GM13976 (cell line): ENCODE measurements at regions of chr12 and their contacts with region 1.

Region 1: DNA sequence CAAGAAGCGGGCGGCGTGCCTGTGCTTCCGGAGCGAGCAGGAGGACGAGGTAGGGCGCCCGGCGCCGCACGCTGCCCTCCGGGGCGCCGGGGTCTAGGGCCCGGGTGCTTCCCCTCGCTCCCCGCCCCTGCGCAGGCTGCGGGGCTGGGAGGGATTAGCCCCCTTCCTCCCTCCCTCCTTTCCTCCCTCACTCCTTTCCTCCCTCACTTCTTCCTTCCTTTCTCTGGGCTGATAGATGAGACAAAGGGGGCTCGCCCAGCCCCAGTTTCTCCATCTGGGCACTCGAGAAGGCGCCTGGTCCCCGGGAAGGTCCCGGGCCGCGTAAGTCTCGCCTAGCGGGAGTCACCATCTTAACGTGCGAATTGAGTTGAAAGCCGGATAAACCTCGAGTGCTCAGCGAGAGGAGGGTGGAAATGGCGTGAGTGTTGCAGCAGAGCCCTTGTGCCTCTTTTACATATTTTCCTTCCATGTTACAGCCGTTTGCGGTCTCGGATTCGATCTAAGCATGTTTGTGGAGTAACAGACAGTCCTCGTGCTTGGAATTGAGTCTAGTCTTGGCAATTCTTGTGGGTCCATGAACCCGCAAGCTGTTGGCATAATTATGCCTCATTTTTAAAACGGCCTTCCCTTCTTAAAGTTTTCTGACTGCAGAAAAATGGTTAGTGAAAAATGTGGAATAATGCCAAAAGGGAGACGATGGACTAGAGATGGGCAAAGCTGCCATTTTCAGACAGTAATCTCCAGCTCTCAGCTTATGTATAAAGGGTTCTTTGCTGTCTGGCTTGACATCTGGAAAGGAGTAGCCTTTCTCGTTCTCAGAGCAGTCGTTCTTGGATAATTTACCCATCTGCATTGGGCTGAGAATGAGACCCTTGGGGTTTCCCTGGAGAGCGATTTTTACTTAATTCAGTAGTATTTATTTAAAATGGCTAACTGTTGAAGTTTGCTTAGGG is 924 bp downstream of the NUDT4 start:
- DNase-seq: peak; percentile 69
- CTCF ChIP-seq: no peak

Region 2: GRCh38 chr12:92702754-92703679 is 675.6 kb before region 1 on chr12 and contains the start of gene PLEKHG7:
- in situ Hi-C with region 1: no loop called
- DNase-seq: peak; percentile 77
- CTCF ChIP-seq: no peak

Region 3: DNA sequence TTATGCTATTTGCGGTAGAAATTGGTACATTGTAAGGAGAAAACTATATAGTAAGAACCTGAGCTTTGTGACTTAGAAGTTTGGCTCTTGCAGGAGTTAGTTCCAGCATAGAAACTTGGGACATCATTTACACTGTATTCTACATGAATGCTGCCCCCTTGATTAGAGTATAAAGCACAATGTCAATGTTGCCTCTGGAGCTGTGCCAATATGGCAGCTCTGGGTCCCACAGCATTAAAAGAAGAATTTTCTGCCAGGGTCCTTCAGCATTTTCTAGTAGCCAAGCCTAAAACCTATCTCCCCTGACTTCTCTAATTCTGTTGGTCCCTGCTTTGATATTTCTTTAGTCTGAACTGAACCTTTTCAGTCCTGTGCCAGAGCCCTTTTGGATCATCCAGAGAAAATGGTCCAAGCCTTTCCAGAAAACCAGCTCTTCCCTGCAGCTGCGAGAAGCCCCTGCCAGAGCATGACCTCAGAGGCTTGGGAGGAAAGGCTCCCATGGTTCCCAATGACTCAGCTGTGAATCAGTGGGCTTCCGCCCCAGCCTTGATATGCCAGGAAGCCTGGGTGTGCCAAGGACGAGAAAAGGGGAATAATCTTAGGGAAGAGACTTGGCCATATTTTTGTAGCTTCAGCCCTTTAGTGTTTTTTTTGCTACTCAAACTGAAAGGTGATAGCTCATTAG is 632.7 kb before region 1 on chr12:
- in situ Hi-C with region 1: no loop called
- DNase-seq: no peak
- CTCF ChIP-seq: no peak

Region 4: DNA sequence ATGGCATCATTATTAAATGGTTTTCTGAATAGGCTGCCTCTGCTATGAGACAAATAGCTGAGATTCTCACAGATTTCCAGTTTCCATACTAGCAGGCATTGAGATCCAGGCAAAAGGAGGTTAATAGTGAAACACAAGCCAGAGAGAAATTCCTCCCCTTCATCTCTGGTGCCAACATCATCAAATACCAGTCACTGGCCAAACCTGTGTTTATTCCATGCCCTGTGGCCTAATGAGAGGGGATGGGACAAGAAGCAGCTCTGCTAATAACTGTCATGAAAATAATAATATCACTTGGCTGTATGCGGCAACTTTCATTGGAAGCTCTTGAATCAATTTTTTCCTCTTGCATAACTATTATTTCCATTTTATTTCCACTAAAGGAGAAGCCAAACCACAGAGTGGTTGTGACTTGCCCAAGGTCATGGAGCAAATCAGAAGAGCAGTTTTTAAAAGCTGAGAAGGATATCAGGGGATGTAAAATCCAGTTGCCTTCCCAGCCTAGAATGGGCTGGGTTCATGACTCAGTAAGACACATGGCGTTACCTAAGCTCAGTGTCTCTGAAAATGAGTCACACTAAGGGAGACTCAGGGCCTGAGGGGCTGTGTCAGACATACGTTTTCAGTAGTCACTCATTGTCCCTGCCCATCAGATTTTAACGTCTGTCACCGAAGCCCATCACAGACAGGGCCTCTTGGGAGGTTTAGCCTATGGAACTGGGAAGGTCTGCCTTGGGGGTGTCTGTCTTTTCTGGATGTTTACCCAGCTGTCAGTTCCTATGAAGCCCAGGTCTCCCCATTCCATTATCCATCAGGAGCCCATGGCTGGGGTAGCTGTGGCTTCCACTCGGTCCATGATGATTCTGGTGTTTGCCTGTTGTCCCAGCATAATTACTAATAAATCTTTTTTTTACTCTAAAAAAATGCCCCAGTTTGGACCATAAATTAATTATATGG is 240.7 kb before region 1 on chr12:
- in situ Hi-C with region 1: loop called (anchors 25 kb)
- DNase-seq: peak; percentile 27
- CTCF ChIP-seq: no peak